Posterior vena cava (tissue), 2 donors: ENCODE measurements at regions of chr3 and their contacts with region 1.

Region 1: GRCh38 chr3:173719585-173719984 is 322.0 kb downstream of the NLGN1 start:
- DNase-seq: no peak

Region 2: DNA sequence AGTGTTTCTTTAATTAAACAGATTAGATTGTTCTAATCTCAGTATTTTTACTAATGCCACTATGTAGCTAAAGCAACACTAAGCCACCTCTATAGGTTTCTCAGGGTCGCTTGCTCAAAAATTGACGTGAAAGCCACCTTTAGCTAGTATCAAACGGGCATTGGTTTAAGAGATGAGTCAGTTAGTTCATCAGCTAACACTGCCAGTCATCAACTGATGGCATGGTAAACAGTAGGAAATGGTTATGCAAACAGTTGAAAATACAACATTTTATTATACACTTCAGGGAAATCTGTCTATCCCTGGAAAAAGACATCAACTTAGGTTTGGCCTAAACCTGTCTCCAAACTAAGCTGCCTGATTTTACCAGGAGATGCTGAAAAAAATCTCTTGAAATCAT is 557.2 kb after region 1 on chr3:
- intact Hi-C with region 1: no loop called
- DNase-seq: no peak

Region 3: GRCh38 chr3:174775587-174775986 is 1056.0 kb after region 1 on chr3:
- intact Hi-C with region 1: loop called in 1 of 2 experiments (anchors 5 kb)
- DNase-seq: no peak